PC-3 (cell line): ENCODE measurements at regions of chr1 and their contacts with region 1.

Region 1: GRCh38 chr1:186722711-186723309 is 42.6 kb upstream of the PTGS2 start:
- DNase-seq: peak; percentile 57
- ATAC-seq: no peak
- H3K4me3 ChIP-seq: no peak overlapping the region
- H3K27ac ChIP-seq: no peak overlapping the region
- H3K4me1 ChIP-seq: no peaks in the 10 kb centered on the region
- H3K27me3 ChIP-seq: no peaks in the 10 kb centered on the region
- CTCF ChIP-seq: peak; percentile 70

Region 2: DNA sequence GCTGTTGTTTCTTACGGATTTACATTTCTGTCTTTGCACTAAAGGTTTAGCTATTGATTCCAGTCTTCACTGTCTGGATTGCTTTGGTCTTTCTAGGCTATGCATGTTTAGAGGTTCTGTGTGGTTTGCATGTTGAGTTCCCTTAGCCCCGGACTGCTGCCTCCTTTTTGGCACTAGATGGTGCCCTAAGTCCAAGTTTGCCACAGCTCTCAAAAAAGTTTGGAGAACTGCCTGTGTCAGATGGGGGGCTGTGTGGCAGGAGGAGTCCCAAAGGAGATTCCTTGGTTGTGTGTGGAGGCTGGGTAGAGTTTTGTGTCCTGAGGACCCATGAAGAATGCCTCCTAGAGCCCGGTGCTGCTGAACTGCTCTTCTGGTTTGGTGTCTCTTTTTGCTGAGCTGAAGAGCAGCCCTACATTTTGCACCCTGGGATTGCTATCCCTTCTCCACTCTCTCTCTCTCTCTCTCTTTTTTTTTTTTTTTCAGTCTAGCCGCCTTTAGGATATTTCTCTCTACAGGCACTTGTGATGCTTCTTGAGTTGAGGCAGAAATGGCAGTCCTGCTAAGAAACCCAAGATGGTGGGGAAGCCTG is 117.0 kb before region 1 on chr1:
- CTCF ChIA-PET with region 1: interaction called, 10 read pairs
- POLR2A ChIA-PET with region 1: no interaction called
- intact Hi-C with region 1: no loop called
- DNase-seq: peak; percentile 57
- ATAC-seq: peak; percentile 56; the same call in 1 of the 2 replicates
- H3K4me3 ChIP-seq: no peak overlapping the region
- H3K27ac ChIP-seq: peak overlapping the region; percentile 11; the same call in 1 of the 2 replicates
- H3K4me1 ChIP-seq: no peaks in the 10 kb centered on the region
- H3K27me3 ChIP-seq: no peaks in the 10 kb centered on the region
- CTCF ChIP-seq: peak; percentile 79

Region 3: DNA sequence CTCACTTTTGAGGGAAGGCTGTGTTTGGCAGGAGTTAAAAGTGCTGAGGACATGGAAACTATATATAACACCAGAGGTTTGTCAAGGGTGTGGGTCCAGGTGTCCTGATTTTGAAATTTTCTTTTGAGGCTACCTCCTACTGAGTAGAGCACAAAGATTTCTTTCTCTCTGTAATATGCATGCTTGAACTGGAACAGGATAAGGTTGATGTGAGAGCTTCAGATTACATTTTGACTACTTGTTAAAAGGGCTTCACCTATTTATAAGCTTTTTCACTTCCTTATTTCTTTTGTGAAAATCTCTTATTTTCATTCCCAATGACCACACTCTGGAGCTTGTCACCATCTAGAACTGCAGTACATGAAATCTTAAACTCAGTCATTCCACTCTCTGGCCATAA is 46.1 kb after region 1 on chr1:
- CTCF ChIA-PET with region 1: no interaction called
- POLR2A ChIA-PET with region 1: interaction called, 11 read pairs
- intact Hi-C with region 1: no loop called
- DNase-seq: no peak
- ATAC-seq: no peak
- H3K4me3 ChIP-seq: no peak overlapping the region
- H3K27ac ChIP-seq: no peak overlapping the region
- H3K4me1 ChIP-seq: no peaks in the 10 kb centered on the region
- H3K27me3 ChIP-seq: no peaks in the 10 kb centered on the region
- CTCF ChIP-seq: no peak

Region 4: GRCh38 chr1:186799689-186800054 is 76.9 kb after region 1 on chr1:
- CTCF ChIA-PET with region 1: interaction called, 7 read pairs
- POLR2A ChIA-PET with region 1: no interaction called
- intact Hi-C with region 1: loop called (anchors 2 kb)
- DNase-seq: peak; percentile 6
- ATAC-seq: no peak
- H3K4me3 ChIP-seq: no peak overlapping the region
- H3K27ac ChIP-seq: peak overlapping the region; percentile 97
- H3K4me1 ChIP-seq: peaks cover 33% of the 10 kb centered on the region
- H3K27me3 ChIP-seq: no peaks in the 10 kb centered on the region
- CTCF ChIP-seq: no peak

Region 5: DNA sequence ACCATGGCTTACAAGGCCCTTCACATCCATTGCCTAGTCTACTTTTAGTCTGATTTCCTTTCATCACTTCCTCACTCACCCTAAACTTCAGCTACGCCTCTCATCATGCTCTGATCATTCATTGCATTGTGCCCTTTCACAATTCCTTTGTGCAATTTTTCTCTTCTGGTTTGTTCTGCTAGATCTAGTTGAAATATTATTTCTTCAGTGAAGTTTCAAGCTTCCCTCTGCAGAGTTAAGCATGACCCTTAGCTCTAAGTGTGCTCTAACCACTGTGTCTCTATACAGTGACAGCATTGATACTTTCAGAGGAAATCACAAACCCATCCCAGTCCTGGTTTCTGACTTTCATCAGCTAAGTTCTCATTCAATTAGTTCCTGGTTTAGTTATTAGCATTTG is 272.1 kb after region 1 on chr1:
- CTCF ChIA-PET with region 1: no interaction called
- POLR2A ChIA-PET with region 1: no interaction called
- intact Hi-C with region 1: no loop called
- DNase-seq: no peak
- ATAC-seq: no peak
- H3K4me3 ChIP-seq: no peak overlapping the region
- H3K27ac ChIP-seq: no peak overlapping the region
- H3K4me1 ChIP-seq: no peaks in the 10 kb centered on the region
- H3K27me3 ChIP-seq: no peaks in the 10 kb centered on the region
- CTCF ChIP-seq: no peak